ENCODE measurements at regions of chr6 and their contacts with region 1.

Region 1: DNA sequence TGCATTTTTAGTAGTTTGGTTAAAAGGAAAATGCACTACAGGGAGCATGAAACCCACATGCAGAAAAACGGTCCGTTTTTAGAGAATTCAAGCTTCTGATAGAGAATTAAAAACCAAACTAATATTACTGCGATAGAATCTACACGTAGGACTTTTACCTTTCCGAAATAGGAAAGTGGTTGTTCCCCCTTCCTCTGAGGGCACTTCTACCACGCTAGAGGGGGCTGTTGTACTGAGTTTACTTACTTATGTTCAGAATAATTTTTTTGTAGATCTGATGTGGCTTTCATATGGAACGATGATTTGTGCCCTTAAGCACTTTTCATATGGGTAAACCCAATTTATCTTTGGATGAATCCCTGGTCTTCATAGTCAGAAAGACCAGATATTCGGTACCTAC is 264.3 kb upstream of the PLN start:
- H3K4me3 ChIP-seq: no peak overlapping the region
- H3K27ac ChIP-seq: no peak overlapping the region
- H3K4me1 ChIP-seq: no peaks in the 10 kb centered on the region
- CTCF ChIP-seq: peak; percentile 47; the same call in 1 of the 2 replicates

Region 2: DNA sequence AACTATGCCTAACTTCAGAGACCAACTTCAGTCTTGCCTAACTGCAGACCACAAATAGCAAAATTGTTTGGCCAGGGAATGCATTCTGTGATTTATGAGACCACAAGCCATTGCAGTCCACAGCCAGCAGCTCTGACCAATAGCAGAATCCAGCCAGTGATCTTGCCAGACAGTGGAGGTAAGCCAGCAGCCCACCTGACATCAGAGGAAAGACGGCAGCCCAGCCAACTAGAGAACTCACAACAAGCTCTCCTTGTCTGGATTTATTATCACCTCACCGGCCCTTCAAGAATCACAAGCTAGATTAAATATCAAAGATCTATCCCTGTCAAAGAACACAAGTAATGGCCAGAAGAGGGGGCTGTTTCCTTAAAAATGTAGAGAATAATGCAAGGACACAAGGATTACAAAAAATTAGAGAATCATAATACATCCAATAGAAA is 443.2 kb before region 1 on chr6:
- CTCF ChIA-PET with region 1: interaction called, 24 read pairs
- POLR2A ChIA-PET with region 1: no interaction called
- H3K4me3 ChIP-seq: no peak overlapping the region
- H3K27ac ChIP-seq: no peak overlapping the region
- H3K4me1 ChIP-seq: no peaks in the 10 kb centered on the region
- CTCF ChIP-seq: 0 out of 2 replicates have a peak, but pooled peaks have one; percentile 39

Region 3: GRCh38 chr6:118296129-118296901 is 12.5 kb after region 1 on chr6:
- CTCF ChIA-PET with region 1: interaction called, 20 read pairs
- POLR2A ChIA-PET with region 1: no interaction called
- H3K4me3 ChIP-seq: no peak overlapping the region
- H3K27ac ChIP-seq: no peak overlapping the region
- H3K4me1 ChIP-seq: no peaks in the 10 kb centered on the region; the same call in 1 of the 2 replicates
- CTCF ChIP-seq: no peak

Region 4: GRCh38 chr6:118546164-118546879 is 262.6 kb after region 1 on chr6:
- CTCF ChIA-PET with region 1: interaction called, 12 read pairs
- POLR2A ChIA-PET with region 1: no interaction called
- H3K4me3 ChIP-seq: no peak overlapping the region
- H3K27ac ChIP-seq: no peak overlapping the region
- H3K4me1 ChIP-seq: peaks cover 6% of the 10 kb centered on the region
- CTCF ChIP-seq: no peak

Region 5: GRCh38 chr6:118551063-118552053 is 267.6 kb after region 1 on chr6:
- CTCF ChIA-PET with region 1: interaction called, 12 read pairs
- POLR2A ChIA-PET with region 1: no interaction called
- H3K4me3 ChIP-seq: no peak overlapping the region
- H3K27ac ChIP-seq: no peak overlapping the region
- H3K4me1 ChIP-seq: no peaks in the 10 kb centered on the region; the same call in 1 of the 2 replicates
- CTCF ChIP-seq: peak; percentile 40